GM10248 (cell line): ENCODE measurements at regions of chr17 and their contacts with region 1.

Region 1: GRCh38 chr17:2386400-2387085 is 14.3 kb downstream of the MNT start:
- DNase-seq: no peak
- CTCF ChIP-seq: no peak

Region 2: GRCh38 chr17:2282297-2282873 is 104.2 kb before region 1 on chr17:
- CTCF ChIA-PET with region 1: no interaction called
- POLR2A ChIA-PET with region 1: no interaction called
- DNase-seq: peak; percentile 61
- CTCF ChIP-seq: peak; percentile 43

Region 3: GRCh38 chr17:2347547-2348307 is 38.8 kb before region 1 on chr17:
- CTCF ChIA-PET with region 1: interaction called, 15 read pairs
- POLR2A ChIA-PET with region 1: no interaction called
- DNase-seq: no peak
- CTCF ChIP-seq: no peak

Region 4: DNA sequence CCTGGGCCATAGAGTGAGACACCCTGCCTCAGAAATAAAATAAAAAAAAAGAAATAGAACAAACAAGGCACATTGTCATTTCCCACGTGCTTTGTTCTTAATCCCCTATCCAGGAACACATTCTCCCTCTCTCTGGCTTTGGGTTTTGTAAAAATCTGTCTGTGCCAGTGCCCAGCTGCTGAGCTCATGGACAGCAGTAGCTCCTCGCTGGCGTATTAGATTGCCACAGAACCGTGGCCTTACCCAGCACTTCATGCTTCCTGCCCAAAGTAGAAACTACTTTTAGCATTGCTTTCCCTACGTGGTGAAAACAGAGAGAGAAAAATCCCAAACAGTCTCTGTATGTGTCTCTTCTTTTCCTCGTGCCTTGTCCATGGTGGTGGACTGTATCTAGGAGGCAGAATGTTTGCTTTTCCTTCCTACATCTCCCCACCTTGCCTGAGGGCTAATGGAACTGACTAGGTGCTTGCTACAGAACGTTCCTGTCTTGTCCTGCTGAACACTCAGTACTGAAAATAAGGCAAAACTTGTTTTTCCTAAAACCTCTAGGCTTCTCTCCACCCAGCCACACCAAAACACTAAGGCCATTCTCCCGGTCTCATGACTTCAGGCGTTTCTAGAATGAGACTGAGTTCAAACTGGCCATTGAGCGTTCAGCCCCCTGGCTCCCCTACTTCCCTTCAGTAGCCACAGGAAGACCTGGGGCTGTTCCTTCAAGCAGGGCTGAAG is 11.8 kb before region 1 on chr17:
- CTCF ChIA-PET with region 1: interaction called, 39 read pairs
- POLR2A ChIA-PET with region 1: no interaction called
- DNase-seq: no peak
- CTCF ChIP-seq: no peak

Region 5: GRCh38 chr17:2427215-2427614 is 40.7 kb after region 1 on chr17:
- CTCF ChIA-PET with region 1: interaction called, 404 read pairs
- POLR2A ChIA-PET with region 1: no interaction called
- DNase-seq: no peak
- CTCF ChIP-seq: no peak

Region 6: DNA sequence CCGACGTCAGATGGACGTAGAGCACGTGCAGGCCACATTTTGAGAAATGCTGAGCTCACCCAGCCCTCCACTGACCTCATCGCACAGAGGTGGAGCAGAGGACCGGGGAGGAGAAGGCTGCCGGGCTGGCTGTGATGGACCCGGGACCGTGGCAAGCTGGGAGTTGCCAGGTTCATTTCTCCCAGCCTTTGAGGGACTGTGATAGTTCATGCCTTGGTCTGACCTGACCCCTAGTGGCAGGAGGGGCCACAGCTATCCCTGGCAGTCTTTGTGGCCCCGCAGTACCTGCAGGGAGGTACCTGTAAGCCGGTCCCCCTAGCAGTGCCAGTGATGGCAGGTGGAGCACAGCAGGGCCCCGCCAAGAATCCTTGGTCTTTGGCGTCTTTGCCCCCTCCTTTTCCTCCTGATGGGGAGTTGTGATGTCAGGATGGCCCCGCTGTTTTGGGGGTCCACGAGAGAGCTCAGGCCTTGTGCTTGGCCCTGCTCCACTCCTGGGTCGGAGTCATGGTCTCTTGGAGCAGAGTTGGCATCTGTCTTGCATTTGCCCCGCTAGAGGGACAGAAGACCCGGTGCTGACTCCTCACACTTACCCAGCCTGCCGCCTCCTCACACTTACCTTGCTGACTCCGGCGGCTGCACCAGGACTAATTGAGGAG is 626.5 kb after region 1 on chr17:
- CTCF ChIA-PET with region 1: interaction called, 15 read pairs
- POLR2A ChIA-PET with region 1: no interaction called
- DNase-seq: peak; percentile 83
- CTCF ChIP-seq: peak; percentile 90